GM23248 (cell line): ENCODE measurements at regions of chr5 and their contacts with region 1.

Region 1: DNA sequence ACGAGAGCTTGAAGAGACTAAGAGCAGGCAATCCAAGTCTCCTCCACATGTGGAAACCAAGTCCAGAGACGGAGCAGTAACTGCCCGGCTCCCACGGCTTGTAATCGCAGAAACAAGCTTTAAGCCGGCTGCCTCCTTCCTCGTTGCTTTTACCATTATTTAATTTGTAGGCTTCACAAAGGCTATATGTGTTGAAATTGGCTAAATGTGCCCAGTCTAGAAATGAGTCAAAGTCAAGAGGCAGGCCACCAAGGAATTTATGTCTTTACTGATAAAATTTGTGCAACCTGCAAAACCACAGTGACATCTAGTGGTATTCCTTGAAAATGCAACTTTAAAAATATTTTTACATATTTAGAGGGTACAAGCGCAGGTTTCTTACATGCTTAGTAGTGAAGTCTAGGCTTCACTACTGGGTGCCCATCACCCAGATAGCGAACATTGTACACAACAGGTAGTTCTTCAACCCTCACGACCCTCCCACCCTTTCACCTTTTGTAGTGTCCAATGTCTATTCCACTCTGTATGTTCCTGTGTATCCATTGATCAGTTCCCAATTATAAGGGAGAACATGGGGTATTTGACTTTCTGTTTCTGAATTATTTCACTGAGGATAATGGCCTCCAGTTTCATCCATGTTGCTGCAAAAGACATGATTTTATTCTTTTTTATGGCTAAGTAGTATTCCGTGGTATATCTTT is 33.5 kb upstream of the EBF1 start:
- DNase-seq: peak; percentile 90
- H3K4me3 ChIP-seq: peak overlapping the region; percentile 41
- H3K27ac ChIP-seq: peak overlapping the region; percentile 48
- H3K4me1 ChIP-seq: peaks cover 14% of the 10 kb centered on the region
- H3K27me3 ChIP-seq: no peaks in the 10 kb centered on the region

Region 2: GRCh38 chr5:157820593-157821252 is 1312.5 kb before region 1 on chr5:
- in situ Hi-C with region 1: loop called (anchors 25 kb)
- DNase-seq: peak; percentile 79
- H3K4me3 ChIP-seq: no peak overlapping the region
- H3K27ac ChIP-seq: no peak overlapping the region
- H3K4me1 ChIP-seq: peaks cover 17% of the 10 kb centered on the region
- H3K27me3 ChIP-seq: no peaks in the 10 kb centered on the region

Region 3: GRCh38 chr5:159605585-159605984 is 472.4 kb after region 1 on chr5:
- in situ Hi-C with region 1: no loop called
- DNase-seq: no peak
- H3K4me3 ChIP-seq: no peak overlapping the region
- H3K27ac ChIP-seq: no peak overlapping the region
- H3K4me1 ChIP-seq: peaks cover 8% of the 10 kb centered on the region; the same call in 1 of the 2 replicates
- H3K27me3 ChIP-seq: no peaks in the 10 kb centered on the region